ENCODE measurements at regions of chr5 and their contacts with region 1.

Region 1: GRCh38 chr5:141923448-141924352 is at the start of gene DELE1:
- H3K4me3 ChIP-seq: peak within 1 kb of the TSS; percentile 94
- H3K27ac ChIP-seq: peak within 1 kb of the TSS; percentile 80
- H3K4me1 ChIP-seq: no peaks in the 10 kb centered on the region
- CTCF ChIP-seq: no peak

Region 2: GRCh38 chr5:141709699-141710267 is 213.9 kb before region 1 on chr5:
- CTCF ChIA-PET with region 1: no interaction called
- POLR2A ChIA-PET with region 1: no interaction called
- H3K4me3 ChIP-seq: no peak overlapping the region
- H3K27ac ChIP-seq: no peak overlapping the region
- H3K4me1 ChIP-seq: 0 out of 2 replicates have a peak, but pooled peaks cover 2% of the 10 kb centered on the region
- CTCF ChIP-seq: no peak

Region 3: DNA sequence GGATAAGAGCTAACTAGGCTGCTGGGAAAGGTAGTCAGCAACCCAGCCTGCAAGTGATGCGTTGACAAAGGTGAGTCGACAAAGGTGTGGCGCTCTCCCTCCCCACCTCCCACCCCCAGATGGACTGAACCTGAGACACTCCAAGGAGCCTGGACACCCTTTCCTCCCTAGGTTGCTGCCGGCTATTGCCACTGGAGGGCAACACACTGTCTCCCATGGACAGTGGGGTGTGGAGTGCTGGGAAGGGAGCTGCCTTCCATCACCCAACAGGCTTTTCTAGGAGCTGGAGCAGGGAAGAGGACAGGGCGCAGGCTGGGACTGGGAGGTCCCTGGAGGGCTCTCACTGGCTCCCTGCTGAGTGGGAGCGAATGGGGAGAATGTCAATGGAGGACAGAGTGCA is 166.3 kb before region 1 on chr5:
- CTCF ChIA-PET with region 1: no interaction called
- POLR2A ChIA-PET with region 1: no interaction called
- H3K4me3 ChIP-seq: no peak overlapping the region
- H3K27ac ChIP-seq: no peak overlapping the region
- H3K4me1 ChIP-seq: peaks cover 5% of the 10 kb centered on the region; the same call in 1 of the 2 replicates
- CTCF ChIP-seq: peak; percentile 57

Region 4: GRCh38 chr5:141968914-141969608 is 45.4 kb after region 1 on chr5 and contains the start of gene RNF14:
- CTCF ChIA-PET with region 1: interaction called, 3 read pairs
- POLR2A ChIA-PET with region 1: interaction called, 19 read pairs
- H3K4me3 ChIP-seq: peak within 1 kb of the TSS; percentile 93
- H3K27ac ChIP-seq: peak within 1 kb of the TSS; percentile 74
- H3K4me1 ChIP-seq: peaks cover 6% of the 10 kb centered on the region
- CTCF ChIP-seq: peak; percentile 91